ENCODE measurements at regions of chr9 and their contacts with region 1.

Region 1: DNA sequence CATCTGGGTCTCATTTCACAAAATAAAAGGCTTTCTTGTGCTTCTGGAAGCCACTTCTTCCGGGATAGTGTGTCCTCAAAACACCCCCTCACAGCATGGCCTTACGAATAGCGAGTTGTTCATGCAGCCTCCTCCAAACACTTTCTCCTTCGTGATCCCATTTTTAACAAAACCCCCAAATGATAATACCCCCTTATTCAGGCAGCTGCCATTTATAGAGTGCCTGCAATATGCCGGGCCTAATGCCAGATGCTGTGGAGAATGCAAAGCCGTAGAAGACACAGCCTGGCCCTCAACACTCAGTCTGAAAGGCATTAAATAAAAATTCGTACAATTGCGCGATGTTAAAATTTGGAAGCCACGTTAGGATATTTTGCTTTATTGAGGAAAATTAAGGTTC is 66.4 kb upstream of the SLC44A1 start:
- DNase-seq: no peak
- H3K4me3 Mint-ChIP-seq: no peak overlapping the region
- H3K27ac Mint-ChIP-seq: no peak overlapping the region
- H3K4me1 Mint-ChIP-seq: no peaks in the 10 kb centered on the region
- H3K27me3 Mint-ChIP-seq: no peaks in the 10 kb centered on the region

Region 2: DNA sequence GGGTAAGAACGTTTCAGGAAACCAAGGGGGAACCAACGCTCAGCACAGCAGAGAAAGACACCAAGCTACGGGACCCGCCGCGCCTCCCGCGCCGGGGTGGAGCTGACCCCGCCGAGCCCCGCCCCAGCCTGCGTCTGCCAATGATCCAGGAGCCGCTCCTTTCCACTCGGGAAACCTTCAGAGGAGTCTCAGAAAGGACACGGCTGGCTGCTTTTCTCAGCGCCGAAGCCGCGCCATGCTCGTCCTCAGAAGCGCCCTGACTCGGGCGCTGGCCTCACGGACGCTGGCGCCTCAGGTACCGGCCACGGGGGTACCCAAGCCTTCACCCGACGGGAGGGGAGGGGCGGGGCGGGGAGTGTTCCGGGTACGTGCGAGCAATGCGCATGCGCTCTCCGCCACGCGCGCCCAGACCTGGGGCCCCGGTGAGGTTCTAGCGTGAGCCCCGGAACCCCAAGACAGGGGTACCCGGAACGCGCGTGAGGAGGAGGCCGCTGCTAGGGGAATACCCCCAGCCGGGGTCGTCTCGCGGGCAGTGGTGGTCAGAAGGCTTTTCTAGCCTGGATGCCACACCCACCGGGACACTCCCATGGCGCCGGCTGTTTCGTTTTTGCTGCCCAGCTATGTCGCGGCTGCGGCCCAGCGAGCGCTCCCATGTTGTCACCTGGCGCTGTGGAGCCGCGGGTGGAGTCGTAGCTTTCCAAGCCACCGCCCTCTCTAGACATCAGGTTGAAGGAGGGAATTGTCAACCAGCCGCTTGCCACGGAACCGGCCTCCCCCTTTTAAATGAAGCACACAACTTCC is 430.3 kb before region 1 on chr9 and contains the start of gene NIPSNAP3A:
- CTCF ChIA-PET with region 1: no interaction called
- intact Hi-C with region 1: no loop called
- DNase-seq: peak; percentile 89
- H3K4me3 Mint-ChIP-seq: peak within 1 kb of the TSS; percentile 99
- H3K27ac Mint-ChIP-seq: peak within 1 kb of the TSS; percentile 97
- H3K4me1 Mint-ChIP-seq: peaks cover 24% of the 10 kb centered on the region
- H3K27me3 Mint-ChIP-seq: no peaks in the 10 kb centered on the region
- total RNA-seq, gene NIPSNAP3A: 17.8 TPM

Region 3: DNA sequence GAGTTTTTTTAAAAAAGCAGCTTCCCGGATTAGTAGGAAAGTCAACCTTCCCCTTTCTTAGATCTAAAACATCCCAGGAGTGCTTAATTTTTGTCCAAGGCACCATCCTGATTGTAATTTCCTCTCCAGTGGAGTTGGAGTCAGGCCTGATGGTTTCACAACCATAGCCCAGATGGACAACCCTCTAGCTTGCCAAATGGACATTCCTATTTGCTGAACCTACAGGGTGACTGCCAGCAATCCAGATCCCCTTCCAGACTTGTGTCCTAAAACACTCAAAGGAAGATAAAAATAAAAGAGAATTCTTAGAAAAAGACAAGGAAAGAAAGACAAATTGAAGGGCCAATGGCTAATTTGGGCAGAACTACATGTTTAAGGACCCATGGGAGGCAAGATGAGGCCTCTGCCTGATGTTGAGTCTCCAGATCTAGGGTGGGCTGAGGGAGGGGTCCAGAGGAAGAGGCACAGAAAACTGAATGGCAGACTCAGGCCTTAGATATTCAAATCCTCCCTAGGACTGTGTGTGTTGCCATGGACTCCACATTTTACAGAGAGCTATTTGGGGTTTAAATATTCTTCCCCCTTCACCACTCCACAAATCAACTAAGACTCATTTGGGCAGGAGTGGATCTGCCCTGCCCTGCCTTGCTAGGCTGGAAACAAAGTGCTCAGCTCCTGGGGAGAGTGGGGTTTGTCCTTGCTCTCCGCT is 27.9 kb after region 1 on chr9:
- CTCF ChIA-PET with region 1: no interaction called
- intact Hi-C with region 1: loop called (anchors 5 kb)
- DNase-seq: no peak
- H3K4me3 Mint-ChIP-seq: no peak overlapping the region
- H3K27ac Mint-ChIP-seq: no peak overlapping the region
- H3K4me1 Mint-ChIP-seq: no peaks in the 10 kb centered on the region
- H3K27me3 Mint-ChIP-seq: no peaks in the 10 kb centered on the region